ENCODE measurements at regions of chr11 and their contacts with region 1.

Region 1: DNA sequence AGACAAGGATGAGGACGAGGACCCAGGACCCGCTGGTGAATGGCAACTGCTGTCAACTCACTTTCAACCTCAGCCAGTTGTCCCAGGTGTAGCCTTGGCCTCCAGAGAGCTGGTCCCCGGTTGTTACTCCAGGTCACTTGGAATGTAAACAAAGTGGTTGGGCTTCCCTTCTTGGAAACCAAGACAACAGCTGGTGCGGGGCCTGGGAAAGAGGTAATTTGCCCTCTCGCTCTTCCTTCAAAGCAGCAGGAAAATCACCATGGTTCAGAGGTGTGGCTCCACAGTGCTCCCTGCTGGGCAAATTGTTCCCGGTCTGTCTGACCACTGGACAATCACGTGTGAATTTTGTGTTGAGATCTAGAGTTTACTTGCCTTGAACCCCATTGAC is 15.0 kb downstream of the SLC1A2 start:
- DNase-seq: peak; percentile 27
- H3K4me3 ChIP-seq: no peak overlapping the region
- H3K27ac ChIP-seq: no peak overlapping the region
- H3K4me1 ChIP-seq: peaks cover 0 to 3% (median 0%) of the 10 kb centered on the region in 4 donors
- H3K27me3 ChIP-seq: no peaks in the 10 kb centered on the region
- CTCF ChIP-seq: peak; percentile 19 to 40 (median 34)
- EP300 ChIP-seq: no peak
- POLR2A ChIP-seq: no peak

Region 2: DNA sequence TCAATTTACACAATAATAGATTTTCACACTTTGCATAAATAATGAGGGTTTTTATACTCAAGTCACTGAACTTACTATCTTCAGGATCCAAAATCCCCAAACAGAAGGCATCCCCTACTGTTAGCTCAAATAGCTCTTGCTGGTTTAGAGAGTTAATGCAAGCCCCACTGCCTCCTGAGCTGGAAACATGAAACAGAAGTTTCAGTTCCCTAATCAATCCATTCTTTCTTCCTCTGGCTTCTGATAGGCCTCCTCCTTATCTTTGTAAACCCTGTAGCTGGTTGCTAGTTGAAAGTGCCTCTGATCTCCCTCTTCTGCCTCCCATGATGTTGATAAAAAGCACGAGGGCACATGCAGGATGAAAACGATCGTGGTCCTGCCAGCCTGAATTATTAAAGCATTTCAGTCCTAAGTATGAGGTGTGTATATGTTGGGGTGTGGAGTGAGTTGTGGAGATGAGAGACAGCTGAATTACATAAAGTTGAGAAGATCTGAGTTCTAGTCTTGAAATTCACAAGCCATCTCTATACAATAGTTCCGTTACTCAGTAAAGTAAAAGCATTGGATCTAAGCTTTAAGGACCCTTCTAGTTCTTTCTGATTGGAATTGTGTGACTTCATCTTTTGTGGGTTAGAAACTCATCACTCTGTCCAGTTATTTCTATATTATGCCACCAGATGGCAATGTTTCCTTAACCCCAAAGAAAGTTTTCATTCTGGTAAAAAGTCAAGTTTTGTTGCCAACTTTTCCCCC is 818.5 kb before region 1 on chr11:
- in situ Hi-C with region 1: loop called in 3 of 4 experiments (anchors 10 to 25 kb)
- intact Hi-C with region 1: loop called (anchors 10 kb)
- DNase-seq: no peak
- H3K4me3 ChIP-seq: no peak overlapping the region
- H3K27ac ChIP-seq: peak overlapping the region in 3 of 4 donors; percentile 9 to 48 (median 32)
- H3K4me1 ChIP-seq: peaks cover 3 to 24% (median 6%) of the 10 kb centered on the region in 4 donors
- H3K27me3 ChIP-seq: no peaks in the 10 kb centered on the region
- CTCF ChIP-seq: peak; percentile 64 to 82 (median 68)
- EP300 ChIP-seq: no peak
- POLR2A ChIP-seq: no peak

Measured in transverse colon (tissue), 4 donors.